ENCODE measurements at regions of chr15 and their contacts with region 1.

Region 1: GRCh38 chr15:67892559-67893377 is 52.9 kb upstream of the RNU6-1 start:
- H3K4me3 ChIP-seq: no peak overlapping the region
- H3K27ac ChIP-seq: no peak overlapping the region
- H3K4me1 ChIP-seq: no peaks in the 10 kb centered on the region
- CTCF ChIP-seq: no peak

Region 2: GRCh38 chr15:67869701-67870100 is 23.1 kb before region 1 on chr15:
- CTCF ChIA-PET with region 1: no interaction called
- POLR2A ChIA-PET with region 1: no interaction called
- H3K4me3 ChIP-seq: no peak overlapping the region
- H3K27ac ChIP-seq: no peak overlapping the region
- H3K4me1 ChIP-seq: no peaks in the 10 kb centered on the region
- CTCF ChIP-seq: no peak

Region 3: DNA sequence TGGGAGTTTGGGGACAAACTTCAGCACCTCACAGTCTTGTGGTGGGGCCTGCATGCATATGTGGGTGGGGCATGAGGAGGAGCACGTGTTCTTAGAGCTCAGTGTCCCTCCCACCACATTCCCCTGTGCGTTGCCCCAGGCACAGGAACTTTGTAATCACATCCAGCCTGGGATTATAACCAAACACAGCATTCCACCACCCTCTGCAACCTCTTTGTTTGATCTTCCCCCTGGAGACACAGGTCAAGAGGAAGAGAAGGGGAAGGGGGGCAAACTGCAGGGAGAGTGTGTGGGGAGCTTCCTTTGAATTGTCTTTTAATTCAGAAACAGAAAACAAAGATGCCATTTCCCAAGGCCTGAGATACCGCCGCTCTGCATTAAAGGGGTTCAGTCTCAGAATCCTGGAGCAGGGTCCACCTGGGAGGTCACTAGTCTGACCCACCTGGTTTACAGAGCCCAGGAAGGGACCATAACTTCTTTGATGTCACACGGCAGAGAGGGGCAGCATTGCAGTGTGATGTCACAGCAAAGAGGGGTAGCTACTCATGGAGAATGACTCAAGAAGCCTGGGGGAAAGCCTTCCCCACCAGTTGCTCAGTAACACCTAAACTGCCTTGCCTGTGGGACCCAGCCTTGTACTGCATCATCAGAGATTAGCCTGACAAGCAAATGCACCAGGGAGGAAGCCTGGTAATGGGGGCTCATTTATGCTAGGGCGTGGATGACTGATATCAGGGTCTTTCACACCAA is 53.4 kb after region 1 on chr15:
- CTCF ChIA-PET with region 1: no interaction called
- POLR2A ChIA-PET with region 1: no interaction called
- H3K4me3 ChIP-seq: no peak overlapping the region
- H3K27ac ChIP-seq: peak overlapping the region; percentile 10; the same call in 1 of the 2 replicates
- H3K4me1 ChIP-seq: peaks cover 11% of the 10 kb centered on the region; the same call in 1 of the 2 replicates
- CTCF ChIP-seq: no peak

Region 4: GRCh38 chr15:67968564-67968963 is 75.8 kb after region 1 on chr15:
- CTCF ChIA-PET with region 1: no interaction called
- POLR2A ChIA-PET with region 1: interaction called, 12 read pairs
- H3K4me3 ChIP-seq: no peak overlapping the region
- H3K27ac ChIP-seq: no peak overlapping the region
- H3K4me1 ChIP-seq: no peaks in the 10 kb centered on the region; the same call in none of the 2 replicates
- CTCF ChIP-seq: no peak

Region 5: DNA sequence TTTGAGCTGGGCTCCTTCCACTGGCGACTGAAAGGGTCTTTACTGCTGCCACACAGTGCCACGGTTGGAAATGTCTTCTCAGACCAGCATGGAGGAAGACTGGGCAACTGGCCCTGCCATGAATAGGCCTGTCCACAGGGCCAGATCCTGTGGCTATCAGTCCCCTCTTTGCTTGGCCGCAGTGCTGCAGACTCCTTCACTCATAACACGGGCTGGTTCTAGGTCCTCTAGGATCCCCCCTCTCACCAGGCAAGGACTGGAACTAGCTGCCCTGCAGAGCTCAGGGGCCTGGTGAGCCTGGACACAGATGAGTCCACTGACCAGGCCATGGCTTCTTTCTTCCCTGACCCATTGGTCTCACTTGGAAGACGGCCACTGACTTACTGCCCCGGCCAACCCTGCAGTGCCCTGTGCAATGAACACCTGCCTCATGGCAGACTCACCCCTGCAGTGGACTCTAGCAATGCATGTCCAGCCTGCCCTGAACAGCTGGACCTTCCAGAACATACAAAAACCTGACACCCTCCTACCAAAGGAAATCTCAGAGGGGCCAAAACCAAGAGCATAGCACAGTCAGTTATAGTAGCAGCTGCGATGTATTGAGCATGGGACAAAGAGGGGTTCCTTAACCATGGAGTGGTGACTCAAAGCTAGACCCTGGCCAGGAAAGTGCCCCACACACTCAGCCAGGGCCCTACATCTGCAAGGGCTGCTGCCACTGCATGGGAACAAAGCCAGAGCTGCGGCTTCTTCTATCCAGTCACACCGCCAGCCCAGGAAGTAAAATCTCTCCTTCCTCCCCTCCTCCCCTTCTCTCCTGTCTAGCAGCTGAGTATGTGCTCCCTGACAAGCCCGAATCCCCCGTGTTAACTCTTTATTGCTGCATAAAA is 611.3 kb after region 1 on chr15:
- CTCF ChIA-PET with region 1: no interaction called
- POLR2A ChIA-PET with region 1: no interaction called
- H3K4me3 ChIP-seq: no peak overlapping the region
- H3K27ac ChIP-seq: no peak overlapping the region
- H3K4me1 ChIP-seq: no peaks in the 10 kb centered on the region
- CTCF ChIP-seq: no peak

Measured in HEK293 (cell line).